Activated CD4-positive, alpha-beta T cell treated with anti-CD3 and anti-CD28 coated beads for 36 hours (primary cell): ENCODE measurements at regions of chr12 and their contacts with region 1.

Region 1: DNA sequence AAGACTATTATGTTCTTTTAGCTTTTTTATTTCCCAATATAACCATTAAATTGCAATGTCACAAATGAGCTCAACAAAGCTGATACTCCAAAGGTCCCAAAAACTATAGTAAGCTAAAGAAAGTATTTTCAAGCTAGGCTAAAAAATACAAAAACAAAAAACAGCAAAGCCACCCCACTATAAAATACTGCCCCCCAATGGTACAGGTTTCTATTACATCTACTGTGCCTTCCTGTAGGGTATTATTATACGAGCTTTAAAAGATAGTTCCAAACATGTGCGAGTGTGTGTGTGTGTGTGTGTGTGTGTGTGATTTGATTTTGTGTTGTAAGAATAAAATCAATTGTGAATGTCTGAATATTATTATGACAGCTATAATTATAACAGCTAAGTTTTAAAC is 1.1 kb downstream of the IFNG start:
- DNase-seq: no peak
- ATAC-seq: no peak
- H3K4me3 Mint-ChIP-seq: peak overlapping the region; percentile 67
- H3K27ac Mint-ChIP-seq: no peak overlapping the region
- H3K4me1 Mint-ChIP-seq: peaks cover 20% of the 10 kb centered on the region
- H3K27me3 Mint-ChIP-seq: peaks cover under 1% of the 10 kb centered on the region

Region 2: GRCh38 chr12:67355578-67356379 is 802.7 kb before region 1 on chr12:
- CTCF ChIA-PET with region 1: no interaction called
- POLR2A ChIA-PET with region 1: no interaction called
- intact Hi-C with region 1: loop called in 1 of 2 experiments (anchors 10 kb)
- DNase-seq: peak; percentile 22
- ATAC-seq: peak; percentile 65
- H3K4me3 Mint-ChIP-seq: no peak overlapping the region
- H3K27ac Mint-ChIP-seq: no peak overlapping the region
- H3K4me1 Mint-ChIP-seq: peaks cover 29% of the 10 kb centered on the region
- H3K27me3 Mint-ChIP-seq: no peaks in the 10 kb centered on the region

Region 3: DNA sequence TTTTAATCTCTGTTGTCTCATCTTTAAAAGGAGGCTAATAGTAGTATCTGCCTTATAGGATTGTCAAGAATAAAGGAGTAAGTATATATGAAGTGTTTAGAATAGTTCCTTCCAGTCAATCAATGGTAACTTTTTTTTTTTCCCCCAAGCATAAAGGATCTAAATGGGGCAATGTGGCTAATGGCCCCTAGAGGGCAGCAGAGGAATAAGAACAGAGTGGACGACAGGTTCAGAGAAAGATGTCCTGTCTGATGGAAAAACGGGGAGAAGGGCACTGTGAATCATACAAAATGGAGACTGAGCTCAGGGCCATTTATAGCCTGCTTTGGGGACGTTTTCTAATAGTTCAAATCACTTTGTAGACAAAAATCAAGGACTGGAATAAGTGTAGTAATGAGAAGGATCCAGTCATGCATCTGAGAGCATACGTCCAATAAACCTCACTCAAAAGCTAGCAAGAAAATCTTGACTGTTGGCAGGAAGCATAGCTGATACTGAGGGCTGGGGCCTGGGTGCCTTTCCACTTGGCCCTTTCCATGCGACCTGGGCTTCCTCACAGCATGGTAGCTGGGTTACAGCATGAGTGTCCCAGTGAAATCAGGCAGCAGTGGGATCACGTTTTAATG is 117.9 kb before region 1 on chr12:
- CTCF ChIA-PET with region 1: interaction called, 51 read pairs
- POLR2A ChIA-PET with region 1: no interaction called
- intact Hi-C with region 1: loop called (anchors 1 kb)
- DNase-seq: peak; percentile 76
- ATAC-seq: peak; percentile 69
- H3K4me3 Mint-ChIP-seq: no peak overlapping the region
- H3K27ac Mint-ChIP-seq: no peak overlapping the region
- H3K4me1 Mint-ChIP-seq: peaks cover 34% of the 10 kb centered on the region
- H3K27me3 Mint-ChIP-seq: no peaks in the 10 kb centered on the region

Region 4: GRCh38 chr12:68113644-68114043 is 44.8 kb before region 1 on chr12:
- CTCF ChIA-PET with region 1: interaction called, 51 read pairs
- POLR2A ChIA-PET with region 1: no interaction called
- intact Hi-C with region 1: loop called in 1 of 2 experiments (anchors 1 kb)
- DNase-seq: peak; percentile 72
- ATAC-seq: peak; percentile 58
- H3K4me3 Mint-ChIP-seq: no peak overlapping the region
- H3K27ac Mint-ChIP-seq: no peak overlapping the region
- H3K4me1 Mint-ChIP-seq: peaks cover 17% of the 10 kb centered on the region
- H3K27me3 Mint-ChIP-seq: peaks cover 3% of the 10 kb centered on the region

Region 5: DNA sequence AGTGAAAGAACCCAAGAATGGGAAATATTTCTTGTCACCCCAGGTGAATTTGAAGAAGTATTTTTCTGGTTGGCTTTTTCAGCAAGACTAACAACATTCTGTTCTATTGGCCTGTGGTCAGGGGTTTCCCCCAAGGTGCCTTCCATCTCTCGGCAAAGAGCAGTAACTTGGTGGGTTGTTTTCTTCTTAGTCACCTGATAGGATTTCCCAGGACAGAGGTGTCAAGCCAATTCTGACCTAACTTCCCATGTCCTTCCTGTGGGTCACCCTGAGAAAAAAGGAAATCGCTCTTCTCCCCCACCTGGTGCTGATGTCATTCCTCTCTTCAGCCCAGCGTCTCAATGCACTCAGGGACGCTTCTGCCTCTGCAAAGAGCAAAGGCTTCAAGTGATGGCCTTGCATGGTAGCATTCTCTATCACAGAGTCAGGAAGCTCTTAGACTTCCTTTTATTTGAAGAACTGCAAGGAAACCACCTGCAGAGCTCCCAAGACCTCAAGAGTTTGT is 17.2 kb after region 1 on chr12:
- CTCF ChIA-PET with region 1: interaction called, 11 read pairs
- POLR2A ChIA-PET with region 1: no interaction called
- intact Hi-C with region 1: no loop called
- DNase-seq: peak; percentile 78
- ATAC-seq: peak; percentile 84
- H3K4me3 Mint-ChIP-seq: peak overlapping the region; percentile 46
- H3K27ac Mint-ChIP-seq: peak overlapping the region; percentile 65
- H3K4me1 Mint-ChIP-seq: peaks cover 69% of the 10 kb centered on the region
- H3K27me3 Mint-ChIP-seq: no peaks in the 10 kb centered on the region